ENCODE measurements at regions of chr11 and their contacts with region 1.

Region 1: GRCh38 chr11:77066229-77067042 is at the start of gene CAPN5:
- DNase-seq: peak; percentile 80
- H3K4me3 Mint-ChIP-seq: peak within 1 kb of the TSS; percentile 86
- H3K27ac Mint-ChIP-seq: no peak within 1 kb of the TSS
- H3K4me1 Mint-ChIP-seq: no peaks in the 10 kb centered on the region
- H3K27me3 Mint-ChIP-seq: peaks cover 27% of the 10 kb centered on the region
- total RNA-seq, gene CAPN5: 0.10 and 0.32 TPM in 2 replicates

Region 2: DNA sequence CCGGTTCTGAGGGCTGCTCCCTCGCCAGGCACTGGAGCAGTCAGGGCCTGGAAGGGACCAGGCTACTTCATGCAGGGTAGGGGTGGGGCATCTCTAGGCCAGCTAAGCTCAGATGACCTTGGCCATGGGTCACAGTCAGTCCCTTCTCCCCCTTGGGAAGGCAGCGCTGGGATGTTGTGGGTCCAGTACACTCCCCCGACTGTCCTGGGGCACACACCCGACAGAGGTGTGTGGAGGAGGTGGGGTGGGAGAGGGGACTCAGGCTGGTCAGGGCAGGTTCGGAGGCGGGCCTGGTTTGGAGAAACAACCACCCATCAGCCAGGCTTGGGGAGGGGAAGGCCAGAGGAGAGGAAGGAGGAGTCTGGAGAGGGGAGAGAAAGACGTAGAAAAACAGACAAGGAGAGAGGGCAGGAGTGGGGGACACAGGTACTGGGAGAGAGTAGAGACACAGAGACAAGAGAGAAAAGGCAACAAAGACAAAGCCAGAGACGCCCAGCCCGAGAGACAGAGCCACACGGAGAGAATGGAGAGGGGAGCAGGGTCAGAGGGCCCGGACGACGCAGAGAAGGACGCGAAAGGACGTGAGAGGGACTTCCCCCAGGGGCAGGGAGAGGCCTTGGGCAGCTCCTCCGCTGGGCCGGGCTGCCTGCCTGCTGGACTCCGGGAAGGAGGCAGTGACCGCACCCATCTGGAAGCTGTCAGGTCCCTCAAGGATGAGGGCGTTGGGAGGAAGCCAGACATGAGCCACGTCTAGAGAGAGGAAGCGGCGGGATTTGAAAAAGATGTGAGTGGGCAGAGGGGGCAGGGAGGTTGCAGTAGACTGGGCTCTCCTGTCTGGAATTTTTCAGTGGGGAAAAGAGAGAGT is 313.9 kb before region 1 on chr11:
- intact Hi-C with region 1: no loop called
- DNase-seq: no peak
- H3K4me3 Mint-ChIP-seq: no peak overlapping the region
- H3K27ac Mint-ChIP-seq: no peak overlapping the region
- H3K4me1 Mint-ChIP-seq: no peaks in the 10 kb centered on the region
- H3K27me3 Mint-ChIP-seq: peaks cover 6% of the 10 kb centered on the region

Region 3: DNA sequence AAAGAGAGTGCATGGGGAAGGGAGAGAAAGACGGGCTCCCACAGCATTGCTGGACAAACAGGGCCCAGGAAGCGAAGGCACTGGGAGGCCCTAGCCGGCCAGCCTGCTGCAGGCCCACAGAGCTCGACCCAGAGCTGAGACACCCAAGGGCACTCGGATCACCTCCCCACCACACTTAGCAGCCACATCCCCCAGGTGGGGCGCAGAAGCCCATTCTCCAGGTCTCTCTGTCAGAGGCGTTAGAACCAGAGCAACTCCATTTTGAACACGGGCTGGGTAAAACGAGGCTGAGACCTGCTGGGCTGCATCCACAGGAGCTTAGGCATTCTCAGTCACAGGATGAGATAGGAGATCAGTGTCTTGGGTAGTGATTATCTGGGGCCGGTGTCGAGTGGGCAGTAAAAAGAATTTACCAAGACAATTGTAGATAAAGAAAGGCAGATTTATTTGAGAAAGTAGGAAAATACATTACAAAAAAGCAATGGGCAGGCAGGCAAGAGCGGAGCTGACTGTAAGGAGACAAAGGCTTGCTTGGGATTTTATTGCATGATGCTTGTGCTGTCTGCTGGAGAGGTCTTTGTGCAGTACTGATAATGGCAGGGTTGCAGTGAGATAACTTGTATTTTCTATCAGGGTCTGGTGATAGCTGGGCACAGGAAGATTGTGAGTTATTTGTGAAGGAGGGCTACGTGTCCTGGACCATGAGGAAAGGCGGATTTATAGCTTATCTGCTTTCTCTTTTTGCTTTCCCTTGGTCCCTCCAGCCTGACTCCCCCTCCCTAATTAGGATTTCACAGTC is 13.0 kb before region 1 on chr11:
- intact Hi-C with region 1: no loop called
- DNase-seq: no peak
- H3K4me3 Mint-ChIP-seq: no peak overlapping the region
- H3K27ac Mint-ChIP-seq: no peak overlapping the region
- H3K4me1 Mint-ChIP-seq: no peaks in the 10 kb centered on the region
- H3K27me3 Mint-ChIP-seq: peaks cover under 1% of the 10 kb centered on the region

Region 4: DNA sequence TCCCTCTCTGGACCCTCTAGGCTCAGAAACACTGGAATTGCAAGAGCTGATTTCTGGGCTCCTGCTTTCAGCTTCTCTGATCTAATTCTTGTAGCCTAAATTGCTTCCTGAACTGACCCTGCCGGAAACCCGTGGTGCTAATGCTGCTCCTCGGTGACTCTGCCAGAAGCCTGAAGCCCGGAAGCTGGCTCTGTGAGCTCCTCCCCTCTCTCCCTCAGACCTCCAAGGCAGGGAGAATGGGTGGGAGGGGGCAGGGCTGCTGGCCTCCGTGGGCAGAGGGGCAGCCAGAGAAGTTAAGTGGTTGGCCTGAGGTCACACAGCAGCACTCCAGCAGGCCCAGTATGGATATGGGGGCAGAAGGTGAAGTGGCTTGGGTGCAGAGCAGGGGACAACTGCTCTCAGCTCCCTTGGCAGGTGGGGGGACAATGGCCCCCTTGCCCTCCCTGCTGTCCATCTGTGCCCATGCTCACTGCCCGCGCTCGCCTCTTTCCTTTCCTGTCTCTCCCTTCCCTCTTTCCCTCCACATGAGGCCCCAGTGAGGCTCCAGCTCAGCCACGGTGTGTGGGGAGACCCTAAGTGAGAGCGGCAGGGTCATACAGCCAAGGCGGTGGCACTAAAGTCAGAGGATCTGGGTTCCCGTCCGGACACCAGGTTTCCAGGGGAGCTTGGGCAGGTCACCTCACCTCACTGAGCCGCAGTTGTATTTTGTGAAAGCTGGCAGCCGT is 16.6 kb after region 1 on chr11:
- intact Hi-C with region 1: loop called (anchors 2 kb)
- DNase-seq: peak; percentile 50
- H3K4me3 Mint-ChIP-seq: peak overlapping the region; percentile 62
- H3K27ac Mint-ChIP-seq: peak overlapping the region; percentile 90
- H3K4me1 Mint-ChIP-seq: peaks cover 14% of the 10 kb centered on the region
- H3K27me3 Mint-ChIP-seq: peaks cover 5% of the 10 kb centered on the region

Region 5: GRCh38 chr11:77091146-77091940 is 24.9 kb after region 1 on chr11:
- intact Hi-C with region 1: loop called (anchors 1 kb)
- DNase-seq: peak; percentile 69
- H3K4me3 Mint-ChIP-seq: no peak overlapping the region
- H3K27ac Mint-ChIP-seq: no peak overlapping the region
- H3K4me1 Mint-ChIP-seq: peaks cover 8% of the 10 kb centered on the region
- H3K27me3 Mint-ChIP-seq: peaks cover 3% of the 10 kb centered on the region